Naive thymus-derived CD4-positive, alpha-beta T cell (primary cell): ENCODE measurements at regions of chr4 and their contacts with region 1.

Region 1: GRCh38 chr4:37780444-37781150 is 45.9 kb upstream of the PGM2 start:
- DNase-seq: peak; percentile 20 to 90 (median 83)
- ATAC-seq: peak; percentile 96
- H3K4me3 ChIP-seq: peak overlapping the region; percentile 25
- H3K4me3 Mint-ChIP-seq: peak overlapping the region; percentile 19 to 84 (median 62)
- H3K27ac ChIP-seq: peak overlapping the region; percentile 59
- H3K27ac Mint-ChIP-seq: peak overlapping the region; percentile 32 to 96 (median 92)
- H3K4me1 ChIP-seq: peaks cover 12 to 27% of the 10 kb centered on the region in 2 donors
- H3K4me1 Mint-ChIP-seq: peaks cover 11 to 45% (median 28%) of the 10 kb centered on the region in 7 donors
- H3K27me3 ChIP-seq: no peaks in the 10 kb centered on the region
- H3K27me3 Mint-ChIP-seq: peaks cover 0 to 3% (median 0%) of the 10 kb centered on the region in 5 donors

Region 2: DNA sequence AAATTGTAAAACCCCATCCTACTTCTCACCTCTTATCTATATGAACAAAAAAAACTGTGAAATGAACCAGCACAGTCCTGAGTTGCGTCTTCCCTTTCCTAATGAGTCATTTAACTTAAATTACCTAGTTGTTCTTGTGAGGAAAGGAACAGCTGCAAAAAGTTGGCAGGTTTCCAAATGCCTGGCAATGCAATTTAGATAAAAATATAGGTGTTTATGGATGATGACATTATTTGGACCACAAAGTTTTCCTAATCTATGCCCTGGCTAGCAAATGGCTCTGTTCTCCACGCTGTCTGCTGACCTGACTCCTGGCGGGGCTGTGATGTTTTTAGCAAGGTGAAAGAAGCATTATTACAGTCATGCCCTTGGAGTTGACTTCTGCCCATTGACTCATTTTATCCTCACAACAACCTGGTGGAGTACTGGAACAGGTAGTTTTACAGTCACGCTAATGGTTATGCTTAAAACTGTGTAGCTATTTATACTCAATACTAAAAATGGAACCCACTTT is 64.7 kb before region 1 on chr4:
- CTCF ChIA-PET with region 1: no interaction called
- POLR2A ChIA-PET with region 1: no interaction called
- intact Hi-C with region 1: loop called in 1 of 2 experiments (anchors 1 kb)
- DNase-seq: peak in 1 of 9 donors; percentile 24
- ATAC-seq: no peak
- H3K4me3 ChIP-seq: no peak overlapping the region
- H3K4me3 Mint-ChIP-seq: peak overlapping the region in 1 of 10 donors; percentile 15
- H3K27ac ChIP-seq: no peak overlapping the region
- H3K27ac Mint-ChIP-seq: peak overlapping the region in 1 of 9 donors; percentile 40
- H3K4me1 ChIP-seq: no peaks in the 10 kb centered on the region
- H3K4me1 Mint-ChIP-seq: peaks cover 0 to 8% (median 0%) of the 10 kb centered on the region in 7 donors
- H3K27me3 ChIP-seq: no peaks in the 10 kb centered on the region
- H3K27me3 Mint-ChIP-seq: peaks cover 0 to 6% (median 0%) of the 10 kb centered on the region in 5 donors

Region 3: DNA sequence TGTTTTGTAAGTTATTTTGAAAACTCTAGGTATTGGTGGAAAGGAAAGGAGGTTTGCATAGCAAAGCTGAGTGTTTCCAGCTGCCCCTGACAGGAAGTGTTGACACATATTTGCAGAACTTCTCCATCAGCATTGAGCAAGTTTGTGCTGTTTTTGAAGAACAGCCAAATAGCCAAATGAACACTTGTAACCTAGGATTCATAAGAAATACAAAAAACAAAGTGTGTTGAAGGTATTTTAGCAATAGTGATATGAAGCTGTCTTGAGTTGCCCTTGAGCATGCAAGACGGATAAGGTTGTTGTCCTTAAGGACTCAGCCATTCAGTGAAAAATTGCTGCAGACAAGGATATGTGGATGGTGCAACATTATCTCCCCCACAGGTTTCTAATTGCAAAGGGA is 22.4 kb before region 1 on chr4:
- CTCF ChIA-PET with region 1: interaction called, 3 read pairs
- POLR2A ChIA-PET with region 1: interaction called, 3 read pairs
- intact Hi-C with region 1: loop called in 1 of 2 experiments (anchors 2 kb)
- DNase-seq: peak in 4 of 9 donors; percentile 11 to 45 (median 26)
- ATAC-seq: peak; percentile 65
- H3K4me3 ChIP-seq: no peak overlapping the region
- H3K4me3 Mint-ChIP-seq: peak overlapping the region in 2 of 10 donors; percentile 1 to 46
- H3K27ac ChIP-seq: no peak overlapping the region
- H3K27ac Mint-ChIP-seq: peak overlapping the region in 6 of 9 donors; percentile 39 to 86 (median 67)
- H3K4me1 ChIP-seq: peaks cover 0 to 12% of the 10 kb centered on the region in 2 donors
- H3K4me1 Mint-ChIP-seq: peaks cover 11 to 39% (median 21%) of the 10 kb centered on the region in 7 donors
- H3K27me3 ChIP-seq: no peaks in the 10 kb centered on the region
- H3K27me3 Mint-ChIP-seq: no peaks in the 10 kb centered on the region

Region 4: DNA sequence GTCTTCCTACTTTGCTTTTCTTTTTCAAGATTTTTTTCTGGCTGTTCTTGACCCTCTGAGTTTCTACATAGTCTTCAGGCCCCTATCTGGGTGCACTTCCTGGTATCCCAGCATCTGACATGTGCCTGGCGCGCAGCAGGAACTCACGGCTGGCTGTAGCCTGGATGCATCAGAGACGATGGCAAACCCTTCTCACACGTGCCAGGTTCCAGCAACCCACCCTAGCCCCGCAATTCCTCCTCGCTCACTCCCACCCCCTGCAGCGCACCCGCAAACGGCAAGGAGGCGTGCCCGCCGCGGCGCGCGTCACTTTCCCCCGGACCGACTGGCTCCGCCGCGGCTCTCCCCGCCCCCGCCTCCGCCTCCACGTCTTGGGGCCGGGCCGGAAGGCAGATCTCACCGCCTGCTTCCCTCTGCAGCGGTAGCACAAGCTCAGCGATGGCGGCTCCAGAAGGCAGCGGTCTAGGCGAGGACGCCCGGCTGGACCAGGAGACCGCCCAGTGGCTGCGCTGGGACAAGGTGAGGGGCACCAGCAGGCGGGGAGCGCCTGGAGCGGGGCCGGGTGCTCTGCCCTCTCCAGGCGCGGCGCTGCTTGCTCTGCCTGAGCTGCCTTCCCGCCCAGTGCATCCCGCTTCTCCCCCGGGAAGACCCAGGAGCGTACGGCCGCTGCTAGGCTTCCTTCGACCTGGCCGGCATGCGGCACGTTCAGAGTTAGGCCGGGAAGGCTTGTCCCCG is 45.9 kb after region 1 on chr4 and contains the start of gene PGM2:
- CTCF ChIA-PET with region 1: no interaction called
- POLR2A ChIA-PET with region 1: no interaction called
- intact Hi-C with region 1: loop called in 1 of 2 experiments (anchors 1 kb)
- DNase-seq: peak; percentile 84 to 94 (median 90)
- ATAC-seq: peak; percentile 99
- H3K4me3 ChIP-seq: peak within 1 kb of the TSS; percentile 79
- H3K4me3 Mint-ChIP-seq: peak within 1 kb of the TSS; percentile 93 to 100 (median 98)
- H3K27ac ChIP-seq: peak within 1 kb of the TSS; percentile 80
- H3K27ac Mint-ChIP-seq: peak within 1 kb of the TSS; percentile 92 to 99 (median 96)
- H3K4me1 ChIP-seq: peaks cover 7 to 11% of the 10 kb centered on the region in 2 donors
- H3K4me1 Mint-ChIP-seq: peaks cover 34 to 70% (median 55%) of the 10 kb centered on the region in 7 donors
- H3K27me3 ChIP-seq: no peaks in the 10 kb centered on the region
- H3K27me3 Mint-ChIP-seq: peaks cover 0 to 5% (median 0%) of the 10 kb centered on the region in 5 donors
- total RNA-seq, gene PGM2: 14.4 to 35.2 (median 18.7) TPM

Region 5: GRCh38 chr4:38846015-38846414 is 1065.4 kb after region 1 on chr4:
- CTCF ChIA-PET with region 1: no interaction called
- POLR2A ChIA-PET with region 1: no interaction called
- intact Hi-C with region 1: no loop called
- DNase-seq: no peak
- ATAC-seq: no peak
- H3K4me3 ChIP-seq: no peak overlapping the region
- H3K4me3 Mint-ChIP-seq: no peak overlapping the region
- H3K27ac ChIP-seq: no peak overlapping the region
- H3K27ac Mint-ChIP-seq: peak overlapping the region in 1 of 9 donors; percentile 25
- H3K4me1 ChIP-seq: no peaks in the 10 kb centered on the region
- H3K4me1 Mint-ChIP-seq: peaks cover 0 to 2% (median 0%) of the 10 kb centered on the region in 7 donors
- H3K27me3 ChIP-seq: no peaks in the 10 kb centered on the region
- H3K27me3 Mint-ChIP-seq: peaks cover 0 to 8% (median 0%) of the 10 kb centered on the region in 5 donors